Activated CD8-positive, alpha-beta T cell treated with anti-CD3 and anti-CD28 coated beads, Interleukin-2, amount 10 ng/mL, durations not matched to agents 7 days and 5 days (primary cell): ENCODE measurements at regions of chr13 and their contacts with region 1.

Region 1: DNA sequence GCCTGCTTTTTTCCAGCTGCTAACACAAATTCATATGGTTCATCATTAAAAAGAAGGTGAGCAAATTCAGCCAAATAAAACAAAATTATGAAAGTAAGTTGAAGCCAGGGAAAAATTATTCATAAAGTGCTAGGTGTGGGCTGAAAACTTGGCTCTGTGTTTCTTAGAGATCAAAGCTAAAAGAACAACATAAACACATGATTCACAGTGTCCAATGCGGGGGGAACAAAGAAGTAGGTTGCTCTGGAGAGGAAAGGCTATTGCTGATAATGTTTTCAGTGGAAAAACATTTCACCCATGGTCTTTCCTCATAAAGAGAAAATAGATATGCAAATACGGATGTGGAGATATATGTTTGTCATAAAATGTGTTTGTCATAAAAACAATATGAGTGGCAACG is 1691.5 kb upstream of the SLC10A2 start:
- DNase-seq: no peak
- ATAC-seq: no peak
- H3K4me3 Mint-ChIP-seq: no peak overlapping the region
- H3K27ac Mint-ChIP-seq: no peak overlapping the region
- H3K4me1 Mint-ChIP-seq: no peaks in the 10 kb centered on the region
- H3K27me3 Mint-ChIP-seq: no peaks in the 10 kb centered on the region

Region 2: GRCh38 chr13:104586051-104586746 is 171.5 kb before region 1 on chr13:
- CTCF ChIA-PET with region 1: no interaction called
- POLR2A ChIA-PET with region 1: no interaction called
- DNase-seq: no peak
- ATAC-seq: no peak
- H3K4me3 Mint-ChIP-seq: no peak overlapping the region
- H3K27ac Mint-ChIP-seq: no peak overlapping the region
- H3K4me1 Mint-ChIP-seq: no peaks in the 10 kb centered on the region
- H3K27me3 Mint-ChIP-seq: no peaks in the 10 kb centered on the region

Region 3: DNA sequence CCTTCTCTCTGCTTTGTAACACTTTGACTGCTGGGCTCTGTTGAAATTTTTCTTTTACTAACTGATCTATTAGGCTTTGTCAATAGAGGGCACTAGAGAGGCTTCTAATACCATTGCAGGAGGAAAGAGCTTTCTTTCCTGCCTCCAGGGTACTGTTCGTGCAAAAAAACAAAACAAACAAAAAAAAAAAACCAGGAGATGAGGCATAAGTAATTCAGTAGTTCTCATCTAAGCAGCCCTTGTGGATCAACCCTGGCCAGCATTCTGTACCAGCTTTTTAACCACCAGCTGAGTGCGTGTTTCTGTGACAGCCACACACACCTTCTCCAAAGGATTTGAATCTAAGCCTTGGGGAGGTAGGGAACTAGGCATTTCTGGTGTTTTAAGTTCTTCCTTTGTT is 16.1 kb after region 1 on chr13:
- CTCF ChIA-PET with region 1: interaction called, 10 read pairs
- POLR2A ChIA-PET with region 1: no interaction called
- DNase-seq: no peak
- ATAC-seq: no peak
- H3K4me3 Mint-ChIP-seq: no peak overlapping the region
- H3K27ac Mint-ChIP-seq: no peak overlapping the region
- H3K4me1 Mint-ChIP-seq: peaks cover 3% of the 10 kb centered on the region
- H3K27me3 Mint-ChIP-seq: no peaks in the 10 kb centered on the region

Region 4: GRCh38 chr13:104796581-104796980 is 38.9 kb after region 1 on chr13:
- CTCF ChIA-PET with region 1: no interaction called
- POLR2A ChIA-PET with region 1: no interaction called
- DNase-seq: no peak
- ATAC-seq: no peak
- H3K4me3 Mint-ChIP-seq: no peak overlapping the region
- H3K27ac Mint-ChIP-seq: no peak overlapping the region
- H3K4me1 Mint-ChIP-seq: no peaks in the 10 kb centered on the region
- H3K27me3 Mint-ChIP-seq: no peaks in the 10 kb centered on the region

Region 5: DNA sequence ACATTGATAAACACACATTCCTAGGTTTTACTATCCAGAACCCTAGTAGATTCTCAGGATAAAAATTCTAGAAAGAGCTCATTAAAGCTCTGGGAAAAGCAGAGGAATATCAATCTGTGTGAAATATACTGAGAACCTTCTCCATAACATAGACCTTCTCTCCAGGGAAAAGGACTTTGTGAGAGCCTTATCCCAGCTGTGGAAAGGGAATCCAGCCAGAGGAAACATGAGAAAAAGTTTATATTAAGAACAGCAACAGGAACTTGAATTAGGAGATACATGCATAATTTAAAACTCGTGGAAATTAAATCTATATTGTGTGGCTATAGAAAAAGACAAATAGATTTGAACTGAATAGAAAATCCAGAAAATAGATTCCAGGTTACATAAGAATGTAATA is 137.8 kb after region 1 on chr13:
- CTCF ChIA-PET with region 1: no interaction called
- POLR2A ChIA-PET with region 1: no interaction called
- DNase-seq: no peak
- ATAC-seq: no peak
- H3K4me3 Mint-ChIP-seq: no peak overlapping the region
- H3K27ac Mint-ChIP-seq: no peak overlapping the region
- H3K4me1 Mint-ChIP-seq: peaks cover 2% of the 10 kb centered on the region
- H3K27me3 Mint-ChIP-seq: no peaks in the 10 kb centered on the region

Region 6: GRCh38 chr13:104954210-104954609 is 196.5 kb after region 1 on chr13:
- CTCF ChIA-PET with region 1: no interaction called
- POLR2A ChIA-PET with region 1: no interaction called
- DNase-seq: no peak
- ATAC-seq: no peak
- H3K4me3 Mint-ChIP-seq: no peak overlapping the region
- H3K27ac Mint-ChIP-seq: no peak overlapping the region
- H3K4me1 Mint-ChIP-seq: peaks cover 4% of the 10 kb centered on the region
- H3K27me3 Mint-ChIP-seq: no peaks in the 10 kb centered on the region